Caco-2 (cell line): ENCODE measurements at regions of chr11 and their contacts with region 1.

Region 1: DNA sequence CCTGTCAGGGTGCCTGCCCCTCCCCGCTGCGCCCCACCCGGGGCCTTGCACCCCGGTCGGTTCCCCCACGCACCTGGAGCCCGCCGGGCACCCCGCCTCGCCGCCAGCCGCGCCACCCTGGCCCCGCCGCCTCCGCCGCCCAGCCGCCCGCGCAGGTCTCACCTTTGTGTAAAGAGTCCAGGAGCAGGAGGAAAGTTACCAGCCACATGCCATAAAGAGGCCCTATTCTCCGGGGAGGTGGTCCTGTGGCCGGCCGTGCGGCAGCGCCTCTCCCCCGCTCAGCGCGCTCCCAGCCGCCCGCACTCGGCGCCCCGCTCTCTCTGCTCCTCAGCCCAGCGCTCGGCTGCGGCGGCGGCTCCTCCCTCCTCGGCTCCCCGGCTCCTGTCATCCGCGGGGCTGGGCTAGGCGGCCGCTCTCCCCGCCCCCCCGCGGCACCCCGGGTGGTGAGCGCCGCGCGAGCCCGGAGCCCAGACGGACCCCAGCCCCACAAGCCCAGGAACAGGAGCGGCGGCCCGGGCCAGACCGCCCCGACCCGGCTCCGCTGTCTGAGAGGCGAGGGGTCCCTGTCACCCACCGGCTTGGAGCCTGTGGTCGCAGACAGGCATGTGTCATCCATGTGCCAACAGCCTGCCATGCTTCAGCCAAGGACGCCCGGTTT is at the start of gene DSCAML1:
- DNase-seq: peak in 1 of 2 experiments; percentile 46
- H3K4me3 ChIP-seq: peak within 1 kb of the TSS; percentile 38
- H3K4me3 Mint-ChIP-seq: peak within 1 kb of the TSS; percentile 41
- H3K27ac Mint-ChIP-seq: no peak within 1 kb of the TSS
- H3K4me1 ChIP-seq: peaks cover 18% of the 10 kb centered on the region
- H3K4me1 Mint-ChIP-seq: peaks cover 9% of the 10 kb centered on the region
- H3K27me3 ChIP-seq: peaks cover 10% of the 10 kb centered on the region
- H3K27me3 Mint-ChIP-seq: peaks cover 29% of the 10 kb centered on the region
- CTCF ChIP-seq: no peak
- total RNA-seq, gene DSCAML1: not detected in 2 replicates

Region 2: GRCh38 chr11:117468888-117469287 is 328.1 kb before region 1 on chr11:
- CTCF ChIA-PET with region 1: no interaction called
- POLR2A ChIA-PET with region 1: no interaction called
- intact Hi-C with region 1: no loop called
- DNase-seq: no peak
- H3K4me3 ChIP-seq: no peak overlapping the region
- H3K4me3 Mint-ChIP-seq: no peak overlapping the region
- H3K27ac Mint-ChIP-seq: no peak overlapping the region
- H3K4me1 ChIP-seq: no peaks in the 10 kb centered on the region
- H3K4me1 Mint-ChIP-seq: no peaks in the 10 kb centered on the region
- H3K27me3 ChIP-seq: peaks cover 2% of the 10 kb centered on the region; the same call in 1 of the 2 replicates
- H3K27me3 Mint-ChIP-seq: peaks cover 28% of the 10 kb centered on the region
- CTCF ChIP-seq: peak in 1 of 2 experiments; percentile 45

Region 3: DNA sequence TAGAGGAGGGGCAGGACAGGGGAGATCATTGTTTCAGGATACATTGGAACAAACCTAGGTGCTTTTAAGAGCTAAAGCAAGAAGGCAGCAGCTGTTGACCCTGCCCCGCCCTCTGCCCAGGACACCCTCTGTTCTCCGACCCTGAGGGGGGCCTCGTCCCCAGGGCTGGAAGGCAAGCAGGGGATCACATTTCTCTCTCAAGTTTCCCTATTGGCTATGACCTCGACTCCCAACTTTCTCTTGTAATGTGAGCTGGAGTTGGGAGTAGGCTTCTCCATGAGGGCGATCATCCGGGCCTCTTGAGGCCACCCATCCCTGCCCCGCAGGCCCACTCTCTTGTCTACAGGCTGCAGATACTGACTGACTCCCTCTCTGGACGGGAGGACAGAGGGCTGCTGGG is 37.7 kb before region 1 on chr11:
- CTCF ChIA-PET with region 1: no interaction called
- POLR2A ChIA-PET with region 1: no interaction called
- intact Hi-C with region 1: no loop called
- DNase-seq: no peak
- H3K4me3 ChIP-seq: no peak overlapping the region
- H3K4me3 Mint-ChIP-seq: no peak overlapping the region
- H3K27ac Mint-ChIP-seq: no peak overlapping the region
- H3K4me1 ChIP-seq: no peaks in the 10 kb centered on the region
- H3K4me1 Mint-ChIP-seq: no peaks in the 10 kb centered on the region
- H3K27me3 ChIP-seq: no peaks in the 10 kb centered on the region; the same call in 1 of the 2 replicates
- H3K27me3 Mint-ChIP-seq: peaks cover 11% of the 10 kb centered on the region
- CTCF ChIP-seq: no peak

Region 4: GRCh38 chr11:117807482-117808327 is 10.7 kb after region 1 on chr11:
- CTCF ChIA-PET with region 1: interaction called, 17 read pairs
- POLR2A ChIA-PET with region 1: no interaction called
- intact Hi-C with region 1: no loop called
- DNase-seq: peak; percentile 76 to 85
- H3K4me3 ChIP-seq: no peak overlapping the region
- H3K4me3 Mint-ChIP-seq: no peak overlapping the region
- H3K27ac Mint-ChIP-seq: no peak overlapping the region
- H3K4me1 ChIP-seq: no peaks in the 10 kb centered on the region
- H3K4me1 Mint-ChIP-seq: no peaks in the 10 kb centered on the region
- H3K27me3 ChIP-seq: no peaks in the 10 kb centered on the region
- H3K27me3 Mint-ChIP-seq: peaks cover 15% of the 10 kb centered on the region
- CTCF ChIP-seq: peak; percentile 97 to 98

Region 5: DNA sequence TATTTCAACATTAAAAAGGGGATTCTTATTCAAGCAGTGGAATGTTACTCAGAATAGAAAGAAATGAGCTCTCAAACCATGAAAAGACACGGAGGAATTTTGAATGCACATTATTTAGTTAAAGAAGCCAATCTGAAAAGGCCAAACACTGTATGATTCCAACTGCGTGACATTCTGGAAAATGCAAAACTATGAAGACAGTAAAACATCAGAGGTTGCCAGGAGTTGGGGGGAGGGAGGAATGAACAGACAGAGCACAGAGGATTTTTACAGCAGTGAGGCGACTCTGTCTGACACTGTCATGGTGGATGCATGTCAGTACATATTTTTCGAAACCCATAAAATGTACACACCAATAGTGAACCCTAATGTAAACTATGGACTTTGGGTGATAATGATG is 1648.8 kb after region 1 on chr11:
- CTCF ChIA-PET with region 1: no interaction called
- POLR2A ChIA-PET with region 1: no interaction called
- intact Hi-C with region 1: loop called (anchors 5 kb)
- DNase-seq: no peak
- H3K4me3 ChIP-seq: no peak overlapping the region
- H3K4me3 Mint-ChIP-seq: no peak overlapping the region
- H3K27ac Mint-ChIP-seq: no peak overlapping the region
- H3K4me1 ChIP-seq: peaks cover 6% of the 10 kb centered on the region; the same call in 1 of the 2 replicates
- H3K4me1 Mint-ChIP-seq: no peaks in the 10 kb centered on the region
- H3K27me3 ChIP-seq: no peaks in the 10 kb centered on the region
- H3K27me3 Mint-ChIP-seq: peaks cover 5% of the 10 kb centered on the region
- CTCF ChIP-seq: no peak